Natural killer cell (primary cell): ENCODE measurements at regions of chr3 and their contacts with region 1.

Region 1: GRCh38 chr3:121834696-121835464 is at the starts of genes EAF2 and IQCB1:
- DNase-seq: peak; percentile 95 to 99
- ATAC-seq: peak; percentile 97 to 100 (median 98)
- H3K4me3 ChIP-seq: peak within 1 kb of the TSS; percentile 83
- H3K4me3 Mint-ChIP-seq: peak within 1 kb of the TSS; percentile 98
- H3K27ac ChIP-seq: peak within 1 kb of the TSS; percentile 91
- H3K27ac Mint-ChIP-seq: peak within 1 kb of the TSS; percentile 92 to 97
- H3K4me1 ChIP-seq: peaks cover 14% of the 10 kb centered on the region
- H3K4me1 Mint-ChIP-seq: peaks cover 48 to 50% of the 10 kb centered on the region in 2 donors
- H3K27me3 ChIP-seq: no peaks in the 10 kb centered on the region
- H3K27me3 Mint-ChIP-seq: peaks cover 0 to 9% of the 10 kb centered on the region in 2 donors
- CTCF ChIP-seq: no peak
- total RNA-seq, gene EAF2: 5.1 to 7.4 (median 5.4) TPM
- total RNA-seq, gene IQCB1: 42.6 to 44.3 (median 42.6) TPM

Region 2: DNA sequence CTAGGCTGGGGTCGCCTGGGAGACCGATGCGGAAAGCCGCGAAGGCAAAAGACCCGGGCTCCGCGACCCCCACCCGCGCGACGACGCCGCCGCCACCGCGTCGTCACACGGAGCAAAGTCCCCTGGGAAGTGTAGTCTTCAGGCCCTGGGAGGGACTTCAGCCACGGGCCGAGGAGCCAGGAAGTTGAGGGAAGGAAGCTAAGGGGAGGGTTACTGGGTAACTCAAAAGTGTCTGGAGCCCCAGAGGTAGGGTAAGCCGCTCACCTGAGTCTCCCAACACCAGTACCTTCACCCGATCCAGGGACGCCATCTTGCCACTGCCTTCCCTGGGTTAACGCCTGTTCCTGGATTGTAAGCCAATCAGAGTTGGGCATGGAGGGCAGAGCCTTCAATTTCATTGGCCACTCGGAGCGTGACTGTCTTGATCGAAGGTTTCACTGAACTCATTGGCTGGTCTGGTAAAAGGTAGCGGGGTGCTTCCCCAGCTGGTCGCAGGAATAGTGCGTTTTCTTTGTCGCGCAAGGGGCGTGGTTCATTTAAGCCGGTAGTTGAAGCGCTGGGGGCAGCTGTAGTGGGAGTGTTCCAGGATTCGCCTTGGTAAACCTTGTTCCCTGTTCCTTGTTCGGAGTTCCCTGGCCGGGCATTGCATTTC is 1092.6 kb before region 1 on chr3 and contains the starts of genes GTF2E1 and RABL3:
- intact Hi-C with region 1: loop called (anchors 5 kb)
- DNase-seq: peak; percentile 97 to 99
- ATAC-seq: peak; percentile 94 to 99 (median 96)
- H3K4me3 ChIP-seq: peak within 1 kb of the TSS; percentile 91
- H3K4me3 Mint-ChIP-seq: peak within 1 kb of the TSS; percentile 95
- H3K27ac ChIP-seq: peak within 1 kb of the TSS; percentile 100
- H3K27ac Mint-ChIP-seq: peak within 1 kb of the TSS; percentile 97 to 99
- H3K4me1 ChIP-seq: peaks cover 14% of the 10 kb centered on the region
- H3K4me1 Mint-ChIP-seq: peaks cover 34 to 41% of the 10 kb centered on the region in 2 donors
- H3K27me3 ChIP-seq: no peaks in the 10 kb centered on the region
- H3K27me3 Mint-ChIP-seq: no peaks in the 10 kb centered on the region
- CTCF ChIP-seq: no peak
- total RNA-seq, gene GTF2E1: 10.9 to 15.7 (median 12.7) TPM
- total RNA-seq, gene RABL3: 11.7 to 18.4 (median 16.7) TPM

Region 3: DNA sequence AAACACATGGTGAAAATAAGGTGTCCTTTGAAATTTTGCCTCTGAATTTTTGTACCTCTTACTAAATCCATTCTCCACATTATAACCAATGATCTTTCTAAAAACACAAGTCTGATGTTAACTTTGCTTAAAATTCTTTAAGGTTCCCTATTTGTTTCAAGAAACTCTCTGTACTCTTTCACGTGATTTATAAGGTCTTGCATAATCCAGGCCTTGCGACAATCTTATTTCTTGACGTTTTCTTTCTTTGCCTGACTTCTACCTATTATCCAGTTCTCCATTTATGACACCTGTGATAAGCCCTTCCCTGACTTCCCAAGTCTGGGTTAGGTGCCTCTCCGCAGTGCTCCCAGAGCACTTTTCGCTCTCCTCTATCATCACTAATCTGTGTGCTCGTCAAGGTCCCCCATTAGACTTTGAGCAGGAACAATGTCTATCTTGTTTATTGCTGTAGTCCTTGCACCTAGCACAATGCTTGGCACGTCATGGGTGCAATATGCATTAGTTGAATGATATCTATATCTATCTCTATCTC is 704.1 kb after region 1 on chr3:
- intact Hi-C with region 1: no loop called
- DNase-seq: no peak
- ATAC-seq: no peak
- H3K4me3 ChIP-seq: no peak overlapping the region
- H3K4me3 Mint-ChIP-seq: no peak overlapping the region
- H3K27ac ChIP-seq: no peak overlapping the region
- H3K27ac Mint-ChIP-seq: no peak overlapping the region
- H3K4me1 ChIP-seq: no peaks in the 10 kb centered on the region
- H3K4me1 Mint-ChIP-seq: peaks cover 18 to 21% of the 10 kb centered on the region in 2 donors
- H3K27me3 ChIP-seq: no peaks in the 10 kb centered on the region
- H3K27me3 Mint-ChIP-seq: no peaks in the 10 kb centered on the region
- CTCF ChIP-seq: no peak

Region 4: DNA sequence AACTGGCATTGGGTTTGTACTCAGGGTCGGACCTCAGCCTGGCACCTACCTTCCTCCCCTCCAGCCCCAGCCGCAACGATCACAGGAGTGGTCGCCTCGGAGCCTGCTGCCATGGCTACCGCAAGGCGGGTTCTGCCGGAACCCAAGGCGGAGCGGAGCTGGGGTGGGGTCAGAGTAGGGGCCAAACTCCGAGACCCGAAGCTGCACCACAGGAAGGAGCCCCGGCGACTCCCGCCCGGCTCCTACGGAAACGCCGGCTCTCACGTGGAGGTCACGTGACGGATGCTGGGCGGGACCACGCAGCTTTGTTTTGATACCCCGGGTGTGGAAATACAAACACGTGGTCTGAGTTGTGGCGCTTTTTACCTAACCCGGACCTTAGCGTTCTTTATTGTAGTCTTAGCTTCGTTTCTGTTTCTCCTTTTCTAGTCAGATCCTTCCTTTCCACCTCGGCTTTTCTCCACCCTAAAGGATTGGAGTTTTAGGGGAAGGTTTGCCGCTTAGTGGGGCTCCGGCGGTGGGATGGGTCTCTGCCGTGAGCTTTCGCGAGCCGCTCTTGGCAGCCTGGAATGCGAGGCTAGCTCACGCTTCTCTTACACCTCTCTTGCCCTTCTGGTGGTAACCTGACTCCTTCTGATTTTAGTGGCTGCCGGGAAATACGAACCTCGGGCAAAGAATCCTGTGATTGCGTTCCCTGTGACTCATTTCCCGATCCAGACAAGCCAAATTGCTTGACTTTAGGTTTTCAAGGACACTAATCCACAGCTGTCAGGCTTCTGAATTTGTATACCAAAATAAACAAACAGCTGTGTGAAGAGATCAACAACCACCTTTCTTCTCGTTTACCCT is 958.9 kb after region 1 on chr3 and contains the start of gene HSPBAP1:
- intact Hi-C with region 1: loop called (anchors 10 kb)
- DNase-seq: peak; percentile 92 to 95
- ATAC-seq: peak; percentile 67 to 83 (median 78)
- H3K4me3 ChIP-seq: peak within 1 kb of the TSS; percentile 77
- H3K4me3 Mint-ChIP-seq: peak within 1 kb of the TSS; percentile 94
- H3K27ac ChIP-seq: peak within 1 kb of the TSS; percentile 96
- H3K27ac Mint-ChIP-seq: no peak within 1 kb of the TSS
- H3K4me1 ChIP-seq: peaks cover 21% of the 10 kb centered on the region
- H3K4me1 Mint-ChIP-seq: peaks cover 20 to 25% of the 10 kb centered on the region in 2 donors
- H3K27me3 ChIP-seq: no peaks in the 10 kb centered on the region
- H3K27me3 Mint-ChIP-seq: no peaks in the 10 kb centered on the region
- CTCF ChIP-seq: no peak
- total RNA-seq, gene HSPBAP1: 19.7 to 24.7 (median 23.4) TPM